PC-9 (cell line): ENCODE measurements at regions of chr1 and their contacts with region 1.

Region 1: GRCh38 chr1:32676945-32677344 is 25.6 kb downstream of the SYNC start:
- DNase-seq: no peak
- H3K4me3 ChIP-seq: no peak overlapping the region
- H3K27ac ChIP-seq: no peak overlapping the region
- H3K4me1 ChIP-seq: no peaks in the 10 kb centered on the region
- H3K27me3 ChIP-seq: no peaks in the 10 kb centered on the region
- CTCF ChIP-seq: no peak

Region 2: GRCh38 chr1:32828341-32828740 is 151.4 kb after region 1 on chr1:
- CTCF ChIA-PET with region 1: no interaction called
- POLR2A ChIA-PET with region 1: no interaction called
- intact Hi-C with region 1: loop called (anchors 5 kb)
- DNase-seq: no peak
- H3K4me3 ChIP-seq: no peak overlapping the region
- H3K27ac ChIP-seq: no peak overlapping the region
- H3K4me1 ChIP-seq: no peaks in the 10 kb centered on the region
- H3K27me3 ChIP-seq: no peaks in the 10 kb centered on the region
- CTCF ChIP-seq: peak; percentile 36; the same call in 1 of the 2 replicates